ENCODE measurements at regions of chr1 and their contacts with region 1.

Region 1: DNA sequence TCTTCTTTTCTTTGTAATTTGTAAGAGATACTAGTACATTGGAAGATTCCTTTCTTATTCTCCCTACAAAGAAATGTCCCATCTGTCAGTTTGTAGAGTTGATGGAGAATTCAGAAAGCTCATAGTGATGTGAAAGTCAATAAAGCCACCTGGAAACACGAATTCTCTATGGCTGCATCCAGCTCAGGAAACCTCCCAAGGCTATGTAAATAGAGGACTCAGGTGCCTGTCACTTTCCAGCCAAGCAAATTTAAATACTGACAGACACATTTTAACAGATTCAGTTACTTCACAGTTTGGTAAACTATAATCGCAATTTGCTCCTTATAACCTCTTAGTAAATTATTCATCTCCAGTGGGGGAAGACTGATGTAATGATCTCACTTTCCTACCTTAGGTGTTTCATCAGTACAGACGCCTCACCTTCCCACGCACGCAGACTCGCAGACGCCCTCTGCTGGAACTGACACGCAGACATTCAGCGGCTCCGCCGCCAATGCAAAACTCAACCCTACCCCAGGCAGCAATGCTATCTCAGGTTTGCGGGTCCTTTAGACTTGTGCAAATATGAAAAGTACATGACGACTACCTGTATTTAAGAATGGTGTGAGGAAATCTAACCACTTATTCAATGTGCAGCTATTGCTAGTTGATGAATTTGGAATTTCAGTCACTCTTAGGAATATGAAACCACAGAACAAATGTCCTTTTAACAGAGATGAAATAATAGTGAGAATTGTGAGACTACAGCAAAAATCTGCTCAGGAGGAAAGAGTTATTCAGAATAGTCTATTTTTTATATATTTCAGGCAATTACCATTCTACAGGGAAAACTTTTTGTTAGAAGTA is 60.6 kb downstream of the PTPRC start:
- DNase-seq: peak; percentile 45
- ATAC-seq: peak; percentile 62

Region 2: DNA sequence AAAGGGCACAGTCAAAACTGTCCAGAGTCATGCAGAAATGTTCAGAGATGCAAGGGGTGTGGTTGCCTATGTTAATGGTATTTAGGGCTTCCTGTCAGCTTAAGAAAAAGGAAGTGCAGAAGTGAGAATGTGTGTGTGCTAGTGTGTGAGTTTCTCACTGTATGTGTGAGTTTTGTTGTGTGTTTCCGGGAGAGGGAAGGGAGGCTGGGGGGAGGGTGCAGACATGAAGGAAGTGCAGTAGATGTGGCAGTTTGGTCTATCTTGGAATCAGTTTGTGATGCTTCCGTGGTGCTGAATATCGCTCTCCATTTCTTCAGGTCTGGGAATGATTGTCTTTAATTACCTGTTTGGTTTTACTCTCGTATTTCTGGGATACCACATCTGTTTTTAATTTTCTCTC is 142.4 kb before region 1 on chr1:
- intact Hi-C with region 1: loop called (anchors 10 kb)
- DNase-seq: peak; percentile 48
- ATAC-seq: peak; percentile 58

Region 3: GRCh38 chr1:198633675-198634121 is 65.7 kb before region 1 on chr1:
- intact Hi-C with region 1: no loop called
- DNase-seq: no peak
- ATAC-seq: no peak

Region 4: DNA sequence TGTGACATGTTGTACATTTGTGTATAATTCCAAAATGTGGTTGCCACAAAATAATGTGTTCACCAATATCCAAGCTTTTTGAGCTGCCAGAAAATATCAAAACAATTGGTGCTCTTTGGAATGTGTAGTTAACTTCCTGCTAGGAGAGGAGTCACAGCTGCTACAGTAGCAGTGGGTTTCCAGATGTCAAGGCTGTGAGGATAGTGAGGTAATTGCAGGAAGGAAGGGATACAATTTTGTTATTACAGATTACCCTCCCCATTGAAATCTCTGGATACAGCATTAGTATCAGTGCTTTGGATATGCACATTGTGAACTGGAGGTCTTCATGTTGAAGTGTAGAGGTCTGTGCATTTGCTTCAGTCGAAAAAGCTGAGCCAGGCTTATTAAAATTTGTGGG is 192.7 kb after region 1 on chr1:
- intact Hi-C with region 1: no loop called
- DNase-seq: no peak
- ATAC-seq: peak; percentile 67